Left lung (tissue), 14 donors: ENCODE measurements at regions of chr18 and their contacts with region 1.

Region 1: DNA sequence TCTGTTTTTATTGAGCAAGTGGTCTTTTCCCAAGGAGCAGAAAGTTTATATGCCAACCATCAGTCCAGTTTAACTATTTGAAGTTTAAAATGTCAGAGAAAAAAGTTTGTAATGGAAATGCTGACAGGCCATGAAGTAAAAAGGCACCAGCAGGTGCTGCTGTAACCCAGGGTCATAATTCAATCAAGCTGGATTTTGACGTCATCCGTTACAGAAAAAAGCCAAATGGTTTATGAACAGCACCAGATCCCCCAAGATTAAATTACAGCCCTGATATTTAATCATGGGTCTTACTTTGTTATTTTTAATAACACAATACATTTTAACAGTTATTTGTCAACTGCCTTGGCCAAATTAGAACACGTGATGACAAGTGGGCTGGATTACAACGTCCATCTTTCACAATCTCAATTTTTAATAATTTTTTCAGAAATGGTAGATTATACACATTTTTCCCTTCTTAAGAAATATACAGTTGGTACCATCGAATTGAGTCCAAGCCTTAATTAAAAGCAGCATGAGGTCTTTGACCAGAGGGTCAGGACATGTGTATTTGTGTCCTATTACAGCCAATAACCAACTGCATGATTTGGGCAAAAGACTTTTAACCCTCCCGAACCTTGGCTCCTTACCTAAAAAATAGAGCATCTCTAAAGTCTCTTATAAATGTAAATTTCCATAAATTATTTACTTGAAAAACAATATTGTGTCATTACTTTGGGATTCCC is 10.0 kb downstream of the TCF4 start:
- DNase-seq: no peak
- ATAC-seq: no peak
- H3K4me3 ChIP-seq: no peak overlapping the region
- H3K27ac ChIP-seq: no peak overlapping the region
- H3K4me1 ChIP-seq: peaks cover 0 to 19% of the 10 kb centered on the region in 2 donors
- H3K27me3 ChIP-seq: no peaks in the 10 kb centered on the region
- CTCF ChIP-seq: no peak

Region 2: GRCh38 chr18:55401638-55402191 is 176.3 kb before region 1 on chr18:
- intact Hi-C with region 1: loop called in 1 of 2 experiments (anchors 5 kb)
- DNase-seq: no peak
- ATAC-seq: peak; percentile 72
- H3K4me3 ChIP-seq: peak overlapping the region in 1 of 2 donors; percentile 25
- H3K27ac ChIP-seq: peak overlapping the region; percentile 58 to 82
- H3K4me1 ChIP-seq: peaks cover 3 to 30% of the 10 kb centered on the region in 2 donors
- H3K27me3 ChIP-seq: no peaks in the 10 kb centered on the region
- CTCF ChIP-seq: no peak

Region 3: DNA sequence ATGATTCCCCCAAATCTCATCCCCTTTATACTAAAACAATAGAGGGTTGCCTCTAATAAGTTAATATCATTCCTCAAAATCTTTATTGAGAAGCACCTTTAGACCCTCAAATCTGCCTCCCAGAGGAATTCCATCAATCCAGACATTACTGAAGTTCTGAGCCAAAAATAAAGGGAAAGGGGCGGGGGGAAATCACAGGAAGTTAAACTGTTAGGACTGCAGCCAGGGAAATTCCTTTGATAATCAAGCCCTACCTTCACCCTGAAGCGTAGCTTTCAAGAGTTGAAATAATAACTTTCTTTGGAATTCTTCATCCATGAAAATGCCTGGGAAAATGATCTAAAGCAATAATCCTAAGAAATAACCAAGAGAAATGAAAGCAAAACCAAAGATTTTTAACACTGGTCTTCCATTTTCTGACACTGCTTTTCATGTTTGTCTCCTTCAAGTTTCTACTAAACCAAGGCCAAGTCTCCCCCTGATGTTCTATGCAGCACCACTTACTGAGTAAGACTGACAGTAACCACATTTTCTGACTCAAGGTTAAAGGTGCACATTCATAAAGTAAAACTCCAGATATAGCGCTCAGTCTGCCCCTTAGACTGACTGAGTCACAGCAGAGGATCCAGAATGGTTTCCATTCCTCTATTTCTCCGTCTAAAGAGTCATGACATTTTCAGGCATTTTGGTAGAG is 68.2 kb before region 1 on chr18:
- intact Hi-C with region 1: loop called in 1 of 2 experiments (anchors 10 kb)
- DNase-seq: no peak
- ATAC-seq: peak; percentile 43
- H3K4me3 ChIP-seq: peak overlapping the region in 1 of 2 donors; percentile 12
- H3K27ac ChIP-seq: peak overlapping the region; percentile 74 to 83
- H3K4me1 ChIP-seq: peaks cover 9 to 24% of the 10 kb centered on the region in 2 donors
- H3K27me3 ChIP-seq: no peaks in the 10 kb centered on the region
- CTCF ChIP-seq: no peak

Region 4: GRCh38 chr18:55781481-55781957 is 203.5 kb after region 1 on chr18:
- intact Hi-C with region 1: no loop called
- DNase-seq: peak in 2 of 4 donors; percentile 49 to 72
- ATAC-seq: peak; percentile 55
- H3K4me3 ChIP-seq: no peak overlapping the region
- H3K27ac ChIP-seq: peak overlapping the region in 1 of 2 donors; percentile 72
- H3K4me1 ChIP-seq: peaks cover 0 to 20% of the 10 kb centered on the region in 2 donors
- H3K27me3 ChIP-seq: peaks cover 0 to 31% of the 10 kb centered on the region in 2 donors
- CTCF ChIP-seq: peak; percentile 31 to 40